PC-3 (cell line): ENCODE measurements at regions of chr19 and their contacts with region 1.

Region 1: GRCh38 chr19:49363268-49364082 is at the start of gene DKKL1:
- DNase-seq: peak; percentile 100
- ATAC-seq: peak; percentile 85
- H3K4me3 ChIP-seq: peak within 1 kb of the TSS; percentile 83
- H3K27ac ChIP-seq: peak within 1 kb of the TSS; percentile 6
- H3K4me1 ChIP-seq: peaks cover 11% of the 10 kb centered on the region
- H3K27me3 ChIP-seq: no peaks in the 10 kb centered on the region
- CTCF ChIP-seq: peak; percentile 10; the same call in 1 of the 2 replicates
- total RNA-seq, gene DKKL1: 2.4 and 4.2 TPM in 2 replicates

Region 2: DNA sequence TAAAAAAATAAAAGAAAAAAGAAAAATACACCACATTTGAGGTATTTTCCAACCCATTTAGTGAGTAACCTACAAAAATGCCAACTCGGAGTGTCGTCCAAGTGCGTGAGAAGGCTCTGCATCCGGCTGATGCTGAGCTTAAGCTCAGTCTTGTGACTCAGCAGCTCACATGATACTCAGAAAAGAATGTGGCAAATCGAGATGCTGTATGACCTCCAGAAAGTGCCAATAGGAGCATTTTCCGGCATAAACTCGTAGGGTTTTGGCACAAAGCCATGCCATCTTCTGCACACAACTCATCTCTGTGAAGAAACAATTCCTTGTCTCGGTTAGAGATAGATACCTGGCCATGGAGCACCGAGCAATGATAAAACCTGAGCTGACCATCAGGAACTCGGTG is 147.4 kb before region 1 on chr19:
- CTCF ChIA-PET with region 1: no interaction called
- POLR2A ChIA-PET with region 1: no interaction called
- intact Hi-C with region 1: no loop called
- DNase-seq: peak; percentile 86
- ATAC-seq: peak; percentile 68
- H3K4me3 ChIP-seq: no peak overlapping the region
- H3K27ac ChIP-seq: peak overlapping the region; percentile 27; the same call in 1 of the 2 replicates
- H3K4me1 ChIP-seq: 0 out of 2 replicates have a peak, but pooled peaks cover 10% of the 10 kb centered on the region
- H3K27me3 ChIP-seq: no peaks in the 10 kb centered on the region
- CTCF ChIP-seq: no peak

Region 3: GRCh38 chr19:49231389-49231788 is 132.1 kb before region 1 on chr19:
- CTCF ChIA-PET with region 1: no interaction called
- POLR2A ChIA-PET with region 1: no interaction called
- intact Hi-C with region 1: no loop called
- DNase-seq: no peak
- ATAC-seq: no peak
- H3K4me3 ChIP-seq: no peak overlapping the region
- H3K27ac ChIP-seq: no peak overlapping the region
- H3K4me1 ChIP-seq: no peaks in the 10 kb centered on the region
- H3K27me3 ChIP-seq: no peaks in the 10 kb centered on the region
- CTCF ChIP-seq: no peak

Region 4: GRCh38 chr19:49339301-49340068 is 24.0 kb before region 1 on chr19:
- CTCF ChIA-PET with region 1: no interaction called
- POLR2A ChIA-PET with region 1: interaction called, 3 read pairs
- intact Hi-C with region 1: loop called (anchors 1 kb)
- DNase-seq: peak; percentile 93
- ATAC-seq: peak; percentile 89
- H3K4me3 ChIP-seq: peak overlapping the region; percentile 57
- H3K27ac ChIP-seq: no peak overlapping the region
- H3K4me1 ChIP-seq: peaks cover 14% of the 10 kb centered on the region
- H3K27me3 ChIP-seq: no peaks in the 10 kb centered on the region
- CTCF ChIP-seq: no peak

Region 5: DNA sequence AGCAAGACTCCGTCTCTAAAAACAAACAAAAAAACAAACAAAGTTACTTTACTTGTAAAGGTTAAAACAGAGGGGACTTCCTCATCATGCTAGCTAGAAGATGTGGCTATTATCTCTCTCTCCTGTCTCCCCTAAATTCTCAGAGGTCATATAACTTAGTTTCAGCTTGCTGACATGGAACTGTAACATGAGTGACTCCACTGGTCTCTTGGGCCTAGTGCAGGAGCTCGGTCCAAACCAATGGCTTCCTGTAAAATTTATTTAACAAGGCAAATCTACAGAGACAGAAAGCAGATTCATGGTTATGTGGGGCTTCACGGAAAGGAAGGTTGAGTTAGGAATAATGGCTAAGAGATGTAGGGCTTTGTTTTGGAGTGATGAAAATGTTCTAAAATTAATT is 15.0 kb after region 1 on chr19:
- CTCF ChIA-PET with region 1: no interaction called
- POLR2A ChIA-PET with region 1: interaction called, 16 read pairs
- intact Hi-C with region 1: no loop called
- DNase-seq: no peak
- ATAC-seq: no peak
- H3K4me3 ChIP-seq: no peak overlapping the region
- H3K27ac ChIP-seq: no peak overlapping the region
- H3K4me1 ChIP-seq: no peaks in the 10 kb centered on the region
- H3K27me3 ChIP-seq: no peaks in the 10 kb centered on the region
- CTCF ChIP-seq: no peak

Region 6: DNA sequence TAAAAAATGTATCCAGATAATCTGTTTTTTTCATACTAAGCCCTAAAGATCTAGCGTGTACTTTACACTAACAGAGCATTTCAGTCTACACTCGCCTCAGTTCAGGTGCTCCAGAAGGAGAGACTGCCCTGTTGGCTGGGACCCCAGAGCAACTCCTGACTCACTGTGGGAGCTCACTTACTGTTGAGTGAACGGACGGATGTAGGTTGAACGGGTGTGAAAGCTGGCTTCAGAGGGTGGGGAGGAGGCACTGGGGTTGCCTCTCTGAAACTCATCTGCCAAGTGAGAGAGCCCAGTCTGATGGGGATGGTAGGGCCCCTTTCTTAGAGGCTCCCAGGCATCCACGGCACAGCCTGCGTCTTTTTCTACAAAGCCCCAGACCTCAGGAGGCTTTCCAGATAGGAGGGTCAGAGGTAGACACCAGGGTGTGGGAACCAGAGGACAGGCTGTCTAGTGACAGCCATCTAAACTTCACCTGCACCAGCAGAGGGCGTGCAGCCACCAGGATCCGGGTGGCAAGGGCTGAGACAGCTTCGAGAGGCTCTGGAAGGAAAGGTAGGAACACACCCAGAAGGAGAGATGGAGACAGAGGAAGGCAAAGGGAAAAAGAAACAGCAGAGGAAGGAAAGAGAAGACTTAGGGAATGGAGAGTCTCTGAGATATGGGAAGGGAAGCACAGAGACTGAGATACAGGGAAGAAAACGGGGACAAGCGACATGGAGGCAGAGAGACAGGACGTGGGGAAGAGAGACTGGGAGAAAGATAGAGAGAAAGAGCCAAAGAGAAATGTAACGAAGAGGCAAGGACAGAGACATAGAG is 28.3 kb after region 1 on chr19:
- CTCF ChIA-PET with region 1: no interaction called
- POLR2A ChIA-PET with region 1: no interaction called
- intact Hi-C with region 1: loop called (anchors 2 kb)
- DNase-seq: peak; percentile 95
- ATAC-seq: peak; percentile 99
- H3K4me3 ChIP-seq: no peak overlapping the region
- H3K27ac ChIP-seq: no peak overlapping the region
- H3K4me1 ChIP-seq: 0 out of 2 replicates have a peak, but pooled peaks cover 3% of the 10 kb centered on the region
- H3K27me3 ChIP-seq: no peaks in the 10 kb centered on the region
- CTCF ChIP-seq: peak; percentile 99

Region 7: DNA sequence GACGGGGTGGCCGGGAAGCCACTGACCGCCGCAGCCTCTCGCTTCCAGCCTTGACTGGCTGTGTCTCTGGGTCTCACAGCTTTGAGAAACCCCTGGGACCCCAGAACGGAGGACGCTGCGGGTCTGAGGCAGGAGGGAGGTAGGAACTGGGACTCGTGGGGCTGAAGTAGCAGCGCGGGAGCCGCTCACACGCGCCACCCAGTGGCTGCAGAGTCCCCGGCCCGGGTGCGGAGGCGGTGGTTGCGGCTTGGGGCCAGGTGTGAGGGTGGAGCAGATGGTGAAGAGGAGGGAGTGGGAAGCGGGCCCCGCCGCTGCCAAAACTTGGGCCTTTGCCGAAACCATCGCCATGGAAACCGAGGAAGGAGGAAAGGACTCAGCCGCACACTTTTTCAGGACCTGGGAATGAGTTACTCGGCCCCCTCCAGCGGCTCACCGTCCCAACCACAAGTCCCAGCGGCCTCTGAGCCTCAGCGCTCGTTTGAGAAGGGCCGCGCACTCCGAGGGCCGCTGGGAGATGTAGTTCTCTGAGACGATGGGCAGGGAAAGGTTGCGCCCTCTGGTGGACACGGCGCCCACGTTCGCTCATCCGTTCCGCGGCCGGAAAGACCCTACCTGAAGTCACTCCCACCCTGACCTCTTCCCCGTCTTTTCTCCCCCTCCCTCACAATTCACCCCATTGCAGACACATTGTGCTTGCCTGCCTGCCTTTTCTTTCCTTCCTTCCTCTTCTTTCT is 80.1 kb after region 1 on chr19:
- CTCF ChIA-PET with region 1: interaction called, 4 read pairs
- POLR2A ChIA-PET with region 1: no interaction called
- intact Hi-C with region 1: loop called (anchors 1 kb)
- DNase-seq: peak; percentile 98
- ATAC-seq: peak; percentile 84
- H3K4me3 ChIP-seq: peak overlapping the region; percentile 87
- H3K27ac ChIP-seq: no peak overlapping the region
- H3K4me1 ChIP-seq: no peaks in the 10 kb centered on the region
- H3K27me3 ChIP-seq: peaks cover 36% of the 10 kb centered on the region
- CTCF ChIP-seq: peak; percentile 93

Region 8: DNA sequence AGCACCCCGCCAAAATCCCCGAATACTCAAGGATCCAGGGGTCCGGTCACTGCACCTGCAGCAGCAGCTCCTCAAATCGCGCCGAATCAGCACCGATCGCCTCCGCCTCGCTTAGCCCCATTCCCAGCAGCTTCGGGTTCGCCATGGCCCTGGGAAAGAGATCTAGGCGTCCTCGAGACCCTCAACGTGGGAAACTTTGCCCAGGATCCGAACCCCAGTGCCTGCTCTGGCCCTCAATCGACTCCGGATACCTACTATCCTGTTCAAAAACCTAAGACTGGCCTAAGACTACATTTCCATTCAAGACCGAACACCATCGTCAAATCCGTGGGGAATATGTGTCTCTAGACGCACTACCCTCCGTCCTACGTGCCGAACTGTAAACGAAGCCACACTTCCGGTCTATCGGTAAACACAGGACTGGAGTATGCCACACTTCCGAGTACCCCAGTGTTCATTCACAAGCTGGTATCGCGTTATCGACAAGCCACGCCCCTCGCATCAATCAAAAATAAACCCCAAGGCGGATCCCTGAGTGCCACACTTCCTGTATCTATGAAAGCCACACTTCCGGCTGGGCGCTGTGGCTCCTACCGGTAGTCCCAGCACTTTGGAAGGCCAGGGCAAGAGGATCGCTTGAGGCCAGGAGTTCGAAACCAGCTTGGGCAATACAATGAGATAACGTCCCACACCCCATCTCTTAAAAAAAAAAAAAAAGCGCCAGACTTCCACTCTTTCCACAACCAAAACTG is 88.1 kb after region 1 on chr19 and contains the start of gene PIH1D1:
- CTCF ChIA-PET with region 1: interaction called, 8 read pairs
- POLR2A ChIA-PET with region 1: interaction called, 12 read pairs
- intact Hi-C with region 1: no loop called
- DNase-seq: peak; percentile 100
- ATAC-seq: peak; percentile 97
- H3K4me3 ChIP-seq: peak within 1 kb of the TSS; percentile 80
- H3K27ac ChIP-seq: peak within 1 kb of the TSS; percentile 11; the same call in 1 of the 2 replicates
- H3K4me1 ChIP-seq: peaks cover 8% of the 10 kb centered on the region; the same call in 1 of the 2 replicates
- H3K27me3 ChIP-seq: no peaks in the 10 kb centered on the region
- CTCF ChIP-seq: no peak
- total RNA-seq, gene PIH1D1: 171 and 200 TPM in 2 replicates